CD8-positive, alpha-beta memory T cell (primary cell): ENCODE measurements at regions of chr13 and their contacts with region 1.

Region 1: DNA sequence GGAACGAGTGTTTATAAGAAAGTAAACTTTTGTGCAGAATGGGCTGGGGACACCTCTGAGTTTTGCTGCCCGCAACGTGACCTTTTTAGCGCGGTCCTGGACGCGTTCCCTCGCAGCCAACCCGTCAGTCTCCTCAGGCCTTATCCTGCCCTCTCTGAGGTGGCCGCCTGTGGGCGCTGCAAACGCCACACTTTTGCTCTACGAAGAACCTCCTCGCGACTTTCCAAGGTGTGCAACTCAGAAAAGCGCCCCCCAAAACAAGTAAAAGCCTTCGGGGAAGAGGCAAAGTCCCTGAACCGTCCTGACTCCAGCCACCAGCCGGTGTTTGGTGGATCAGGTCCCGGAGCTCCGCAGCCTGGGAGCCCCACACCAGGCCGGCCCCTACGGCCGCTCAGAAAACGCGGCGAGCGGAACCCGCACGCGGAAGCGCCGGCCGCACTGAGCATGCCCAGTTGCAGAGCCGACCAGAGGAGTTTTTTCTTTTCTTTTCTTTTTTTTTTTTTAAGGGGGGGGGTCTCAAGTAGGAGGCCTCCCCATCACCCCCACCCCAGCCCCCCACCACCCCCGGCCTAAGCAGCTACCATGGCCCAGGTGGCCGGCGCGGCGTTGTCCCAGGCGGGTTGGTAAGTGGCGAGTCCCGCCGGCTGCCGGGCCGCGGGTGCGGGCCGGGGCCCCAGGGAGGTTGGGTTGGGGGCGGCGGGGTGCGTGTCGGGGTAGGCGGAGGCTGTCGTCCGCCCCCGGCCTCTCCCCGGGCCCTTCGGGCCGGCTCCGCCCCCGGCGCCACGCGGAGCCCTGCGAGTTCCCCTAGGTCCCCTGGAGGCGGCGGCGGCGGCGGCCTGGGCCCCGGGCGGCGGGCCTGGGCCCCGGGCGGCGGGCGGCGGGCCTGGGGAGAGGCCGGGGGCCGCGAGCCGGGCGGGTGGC is at the start of gene TDRD3:
- DNase-seq: peak; percentile 63 to 88 (median 83)
- H3K4me3 ChIP-seq: peak within 1 kb of the TSS; percentile 99
- H3K4me3 Mint-ChIP-seq: peak within 1 kb of the TSS; percentile 94 to 99 (median 97)
- H3K27ac ChIP-seq: peak within 1 kb of the TSS; percentile 86
- H3K27ac Mint-ChIP-seq: peak within 1 kb of the TSS; percentile 96 to 99 (median 97)
- H3K4me1 ChIP-seq: peaks cover 23% of the 10 kb centered on the region
- H3K4me1 Mint-ChIP-seq: peaks cover 30 to 47% (median 44%) of the 10 kb centered on the region in 3 donors
- H3K27me3 ChIP-seq: no peaks in the 10 kb centered on the region
- H3K27me3 Mint-ChIP-seq: no peaks in the 10 kb centered on the region
- total RNA-seq, gene TDRD3: 21.2 to 22.7 TPM

Region 2: DNA sequence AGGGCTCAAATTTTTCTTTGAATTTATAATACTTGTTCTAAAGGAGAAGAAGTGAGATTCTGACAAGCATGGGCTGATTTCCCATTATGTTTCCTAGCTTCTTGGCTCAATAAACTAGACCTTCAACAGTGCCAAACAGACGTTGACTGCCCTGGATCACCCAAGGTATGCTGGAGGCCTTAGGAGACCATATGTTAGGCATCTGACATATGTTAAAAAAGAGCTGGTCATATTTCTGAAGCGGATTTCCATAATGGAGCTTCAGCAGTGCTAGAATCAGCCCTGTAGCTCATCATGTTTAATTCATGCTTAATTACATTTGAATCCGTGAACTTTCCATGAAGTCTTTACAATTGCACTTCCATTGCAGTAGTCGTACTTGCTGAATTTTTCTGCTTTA is 886.7 kb before region 1 on chr13:
- CTCF ChIA-PET with region 1: no interaction called
- POLR2A ChIA-PET with region 1: interaction called, 19 read pairs
- DNase-seq: no peak
- H3K4me3 ChIP-seq: no peak overlapping the region
- H3K4me3 Mint-ChIP-seq: no peak overlapping the region
- H3K27ac ChIP-seq: no peak overlapping the region
- H3K27ac Mint-ChIP-seq: no peak overlapping the region
- H3K4me1 ChIP-seq: no peaks in the 10 kb centered on the region
- H3K4me1 Mint-ChIP-seq: no peaks in the 10 kb centered on the region
- H3K27me3 ChIP-seq: no peaks in the 10 kb centered on the region
- H3K27me3 Mint-ChIP-seq: no peaks in the 10 kb centered on the region

Region 3: DNA sequence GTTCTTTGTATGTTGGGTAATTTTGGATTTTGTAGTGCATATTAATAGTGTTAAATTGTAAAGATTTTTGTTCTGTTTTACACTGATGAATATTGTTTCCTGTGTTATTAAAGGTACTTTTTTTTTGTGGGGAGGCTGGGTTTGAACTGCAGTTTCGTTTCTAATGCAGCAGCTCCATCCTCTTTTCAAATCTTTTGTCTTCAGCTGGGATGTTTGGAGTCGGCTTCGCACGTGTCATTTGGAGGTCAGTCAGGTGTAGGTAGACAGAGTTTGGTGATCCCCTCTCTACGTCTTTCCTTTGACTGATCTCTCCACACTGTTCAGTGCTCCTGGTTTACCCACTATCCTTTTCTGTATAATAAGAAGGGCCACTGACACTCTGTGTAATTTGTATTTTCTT is 30.2 kb after region 1 on chr13:
- CTCF ChIA-PET with region 1: interaction called, 11 read pairs
- POLR2A ChIA-PET with region 1: no interaction called
- DNase-seq: peak in 1 of 5 donors; percentile 9
- H3K4me3 ChIP-seq: no peak overlapping the region
- H3K4me3 Mint-ChIP-seq: peak overlapping the region; percentile 38 to 85 (median 71)
- H3K27ac ChIP-seq: peak overlapping the region; percentile 29
- H3K27ac Mint-ChIP-seq: peak overlapping the region; percentile 79 to 99 (median 90)
- H3K4me1 ChIP-seq: peaks cover 16% of the 10 kb centered on the region
- H3K4me1 Mint-ChIP-seq: peaks cover 35 to 52% (median 42%) of the 10 kb centered on the region in 3 donors
- H3K27me3 ChIP-seq: no peaks in the 10 kb centered on the region
- H3K27me3 Mint-ChIP-seq: no peaks in the 10 kb centered on the region